ENCODE measurements at regions of chr1 and their contacts with region 1.

Region 1: DNA sequence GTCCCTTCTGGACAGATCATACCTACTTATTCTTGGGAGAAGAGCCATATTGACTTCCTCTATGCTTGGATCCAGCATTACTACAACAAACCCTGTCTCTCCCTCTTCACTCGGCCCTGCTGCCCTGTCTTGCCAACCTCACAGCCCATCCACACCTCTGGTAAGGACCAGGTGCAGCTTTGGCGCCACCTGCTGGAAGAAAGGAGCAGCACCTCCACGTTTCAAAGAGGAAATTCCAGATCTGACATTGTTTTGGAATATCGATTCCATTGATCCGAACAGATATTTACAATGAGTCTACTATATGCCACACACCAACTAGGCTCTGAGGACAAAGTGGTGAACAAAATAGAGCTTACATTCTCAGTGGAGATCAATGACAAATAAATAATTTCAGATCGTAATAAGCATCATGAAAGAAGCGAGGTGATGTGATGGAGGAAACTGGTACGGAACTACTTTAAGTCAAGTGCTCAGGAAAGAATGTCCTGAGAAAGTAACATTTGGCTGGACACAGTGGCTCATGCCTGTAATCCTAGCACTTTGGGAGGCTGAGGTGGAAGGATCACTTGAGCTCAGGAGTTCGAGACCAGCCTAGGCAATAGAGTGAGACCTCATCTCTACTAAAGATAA is 18.7 kb downstream of the MFSD2A start:
- DNase-seq: peak; percentile 85
- H3K4me3 ChIP-seq: no peak overlapping the region
- H3K27ac ChIP-seq: no peak overlapping the region
- H3K4me1 ChIP-seq: peaks cover 0 to 6% (median 0%) of the 10 kb centered on the region in 4 donors
- H3K27me3 ChIP-seq: no peaks in the 10 kb centered on the region
- CTCF ChIP-seq: peak; percentile 90 to 97 (median 95)
- EP300 ChIP-seq: no peak
- POLR2A ChIP-seq: no peak

Region 2: DNA sequence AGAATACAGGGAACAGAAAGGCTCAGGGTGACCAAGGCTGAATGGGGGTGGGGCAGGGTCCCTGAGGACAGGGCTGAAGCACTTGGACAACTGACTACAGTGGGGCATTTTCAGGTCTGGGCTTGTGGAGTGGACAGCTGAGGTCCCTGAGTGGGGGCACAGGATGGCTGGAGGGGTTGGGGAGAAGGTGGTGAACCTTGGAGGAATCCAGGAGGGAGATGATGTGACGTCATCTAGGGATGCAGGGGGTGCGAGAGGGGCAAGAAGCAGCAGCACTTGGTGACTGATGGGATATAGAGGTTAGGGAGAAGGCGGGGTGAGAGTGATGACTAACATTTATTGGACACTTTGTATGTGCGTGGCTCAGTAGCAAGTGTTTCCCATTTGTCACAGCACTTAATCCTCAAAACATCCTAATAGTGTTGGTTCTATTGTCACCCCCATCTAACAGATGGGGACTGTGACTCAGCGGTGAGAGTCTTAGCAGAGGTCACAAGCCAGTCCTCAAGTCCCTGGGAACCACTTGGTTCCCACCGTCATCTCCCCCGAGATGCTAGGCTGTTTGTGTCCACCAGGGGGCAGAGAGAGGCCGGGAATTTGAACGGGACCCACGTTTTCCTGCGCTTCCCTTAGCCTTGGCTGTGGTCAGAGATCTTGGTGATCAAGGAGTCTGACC is 157.1 kb before region 1 on chr1:
- intact Hi-C with region 1: loop called (anchors 1 kb)
- DNase-seq: peak; percentile 77
- H3K4me3 ChIP-seq: no peak overlapping the region
- H3K27ac ChIP-seq: no peak overlapping the region
- H3K4me1 ChIP-seq: no peaks in the 10 kb centered on the region
- H3K27me3 ChIP-seq: peaks cover 0 to 16% (median 4%) of the 10 kb centered on the region in 3 donors
- CTCF ChIP-seq: peak; percentile 60 to 96 (median 86)
- EP300 ChIP-seq: no peak
- POLR2A ChIP-seq: no peak

Region 3: GRCh38 chr1:39919545-39919944 is 54.1 kb before region 1 on chr1:
- intact Hi-C with region 1: loop called (anchors 2 kb)
- DNase-seq: no peak
- H3K4me3 ChIP-seq: no peak overlapping the region
- H3K27ac ChIP-seq: no peak overlapping the region
- H3K4me1 ChIP-seq: no peaks in the 10 kb centered on the region
- H3K27me3 ChIP-seq: peaks cover 0 to 13% (median 4%) of the 10 kb centered on the region in 3 donors
- CTCF ChIP-seq: peak; percentile 21 to 61 (median 38)
- EP300 ChIP-seq: no peak
- POLR2A ChIP-seq: no peak

Region 4: DNA sequence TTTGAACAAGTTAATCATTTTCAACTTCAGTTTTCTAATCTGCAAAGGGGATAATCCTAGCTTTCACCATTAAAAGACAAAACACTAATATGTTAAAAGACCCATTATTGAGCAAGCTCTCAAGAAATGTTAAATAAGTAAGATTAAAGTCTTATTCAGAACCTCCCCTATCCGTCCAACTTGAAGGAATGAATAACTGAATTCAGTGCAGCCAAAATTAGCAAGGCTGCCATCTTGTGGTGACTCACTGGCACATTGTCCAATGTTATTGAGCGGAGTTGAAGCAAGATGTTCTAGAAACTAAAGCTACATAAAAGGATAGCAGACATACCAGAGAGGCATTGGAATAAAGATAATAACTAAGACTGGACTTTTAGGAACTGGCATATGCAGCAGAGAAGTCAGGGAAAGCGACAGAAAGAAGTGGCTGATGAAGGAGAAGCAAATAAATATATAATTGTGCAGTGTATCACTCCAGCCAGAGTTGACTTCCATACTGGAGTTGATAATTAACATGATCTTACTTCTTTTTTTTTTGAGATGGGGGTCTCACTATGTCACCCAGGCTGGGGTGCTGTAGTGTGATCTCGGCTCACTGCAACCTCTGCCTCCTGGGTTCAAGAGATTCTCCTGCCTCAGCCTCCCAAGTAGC is 58.7 kb after region 1 on chr1:
- intact Hi-C with region 1: loop called (anchors 5 kb)
- DNase-seq: no peak
- H3K4me3 ChIP-seq: no peak overlapping the region
- H3K27ac ChIP-seq: no peak overlapping the region
- H3K4me1 ChIP-seq: peaks cover 0 to 25% (median 15%) of the 10 kb centered on the region in 4 donors
- H3K27me3 ChIP-seq: no peaks in the 10 kb centered on the region
- CTCF ChIP-seq: peak; percentile 19 to 60 (median 48)
- EP300 ChIP-seq: no peak
- POLR2A ChIP-seq: no peak

Region 5: GRCh38 chr1:40059338-40059959 is 85.8 kb after region 1 on chr1:
- intact Hi-C with region 1: no loop called
- DNase-seq: no peak
- H3K4me3 ChIP-seq: no peak overlapping the region
- H3K27ac ChIP-seq: peak overlapping the region; percentile 4 to 49 (median 41)
- H3K4me1 ChIP-seq: peaks cover 0 to 60% (median 39%) of the 10 kb centered on the region in 4 donors
- H3K27me3 ChIP-seq: no peaks in the 10 kb centered on the region
- CTCF ChIP-seq: no peak
- EP300 ChIP-seq: no peak
- POLR2A ChIP-seq: no peak

Measured in sigmoid colon (tissue), 7 donors.